Activated CD4-positive, alpha-beta memory T cell treated with anti-CD3 and anti-CD28 coated beads, Interleukin-2, amount 10 ng/mL, durations not matched to agents 7 days and 5 days (primary cell): ENCODE measurements at regions of chr3 and their contacts with region 1.

Region 1: GRCh38 chr3:124688581-124689454 is 41.4 kb upstream of the UMPS start:
- DNase-seq: peak; percentile 79
- H3K4me3 Mint-ChIP-seq: no peak overlapping the region
- H3K27ac Mint-ChIP-seq: no peak overlapping the region
- H3K4me1 Mint-ChIP-seq: no peaks in the 10 kb centered on the region
- H3K27me3 Mint-ChIP-seq: peaks cover 18% of the 10 kb centered on the region

Region 2: GRCh38 chr3:124467980-124468902 is 220.6 kb before region 1 on chr3:
- CTCF ChIA-PET with region 1: no interaction called
- POLR2A ChIA-PET with region 1: no interaction called
- DNase-seq: peak; percentile 31
- H3K4me3 Mint-ChIP-seq: no peak overlapping the region
- H3K27ac Mint-ChIP-seq: no peak overlapping the region
- H3K4me1 Mint-ChIP-seq: no peaks in the 10 kb centered on the region
- H3K27me3 Mint-ChIP-seq: peaks cover 32% of the 10 kb centered on the region

Region 3: DNA sequence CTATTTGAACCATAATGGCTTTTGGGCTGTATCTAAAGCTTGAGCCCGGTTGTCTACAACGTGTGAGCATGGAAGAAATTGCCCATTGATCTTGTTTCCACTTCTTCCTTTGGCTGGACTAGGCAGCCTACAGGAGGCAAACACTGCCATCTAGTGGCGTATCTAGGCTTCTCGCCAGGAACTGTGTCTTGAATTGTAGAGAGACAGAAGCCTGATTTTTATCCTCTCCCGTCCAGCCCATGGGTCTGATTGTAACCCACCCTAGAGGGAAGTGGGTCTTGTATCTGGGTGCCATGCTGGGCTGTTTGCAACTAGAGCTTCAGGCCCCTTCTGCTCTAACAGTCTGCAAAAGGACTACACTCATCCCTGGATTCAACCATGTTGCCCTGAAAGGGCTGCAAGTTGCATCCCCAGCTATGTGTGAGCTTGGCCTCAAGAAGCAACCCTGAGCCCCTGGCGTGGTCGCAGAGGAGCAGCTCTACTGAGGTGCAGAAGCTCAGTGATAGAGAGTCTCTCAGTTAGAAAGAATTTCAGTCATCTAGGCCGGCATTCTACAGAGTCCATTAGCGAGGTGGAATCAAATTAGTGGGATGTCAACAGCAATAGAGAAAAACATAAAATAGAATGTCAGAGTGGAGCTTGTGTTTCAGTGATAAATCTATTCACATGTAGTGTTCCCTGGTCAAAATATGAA is 128.8 kb before region 1 on chr3:
- CTCF ChIA-PET with region 1: interaction called, 96 read pairs
- POLR2A ChIA-PET with region 1: no interaction called
- DNase-seq: peak; percentile 60
- H3K4me3 Mint-ChIP-seq: no peak overlapping the region
- H3K27ac Mint-ChIP-seq: no peak overlapping the region
- H3K4me1 Mint-ChIP-seq: no peaks in the 10 kb centered on the region
- H3K27me3 Mint-ChIP-seq: peaks cover 50% of the 10 kb centered on the region

Region 4: DNA sequence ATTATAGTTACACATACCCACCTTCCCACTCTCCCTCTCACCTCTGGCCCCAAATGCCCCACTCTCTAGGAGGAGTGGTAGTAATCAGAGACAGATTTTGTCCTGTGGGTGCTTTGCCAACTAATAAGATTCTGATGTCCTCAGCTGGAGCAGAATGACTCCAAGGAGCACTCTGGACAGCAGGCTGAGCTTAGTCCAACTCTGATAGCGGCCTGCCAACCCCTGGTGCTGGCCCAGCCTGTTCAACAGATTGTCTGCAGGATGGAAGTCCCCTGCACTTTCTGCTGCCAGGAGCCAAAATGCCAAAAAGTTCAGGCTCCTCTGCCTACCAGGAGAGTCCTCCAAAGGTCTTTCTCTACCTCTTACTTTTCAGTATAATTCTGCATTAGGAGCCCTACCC is 119.1 kb before region 1 on chr3:
- CTCF ChIA-PET with region 1: interaction called, 96 read pairs
- POLR2A ChIA-PET with region 1: no interaction called
- DNase-seq: no peak
- H3K4me3 Mint-ChIP-seq: no peak overlapping the region
- H3K27ac Mint-ChIP-seq: no peak overlapping the region
- H3K4me1 Mint-ChIP-seq: no peaks in the 10 kb centered on the region
- H3K27me3 Mint-ChIP-seq: peaks cover 26% of the 10 kb centered on the region